ENCODE measurements at regions of chr20 and their contacts with region 1.

Region 1: DNA sequence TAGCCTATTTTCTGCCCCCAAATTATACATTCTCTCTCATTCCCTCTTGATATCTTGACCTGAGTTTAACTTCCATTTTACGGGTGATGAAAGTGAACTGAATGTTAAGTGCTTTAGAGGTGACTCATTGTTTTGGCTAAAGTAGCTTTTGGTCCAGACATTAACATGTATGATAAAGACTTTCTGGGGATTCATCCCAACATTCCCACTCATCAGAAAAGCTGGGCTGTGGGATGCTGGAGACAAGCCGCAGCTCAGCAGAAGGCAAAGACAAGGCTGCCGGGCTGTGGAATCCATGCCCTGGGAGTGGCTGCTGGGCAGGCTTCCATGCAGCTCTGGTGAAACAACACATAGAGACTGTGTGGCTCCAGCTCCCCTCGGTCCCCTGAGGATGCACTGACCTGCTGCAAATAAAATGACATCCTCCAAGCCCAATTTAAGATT is 89.9 kb upstream of the SYNDIG1 start:
- DNase-seq: no peak
- H3K4me3 ChIP-seq: no peak overlapping the region
- H3K4me3 Mint-ChIP-seq: no peak overlapping the region
- H3K27ac Mint-ChIP-seq: no peak overlapping the region
- H3K4me1 ChIP-seq: no peaks in the 10 kb centered on the region
- H3K4me1 Mint-ChIP-seq: no peaks in the 10 kb centered on the region
- H3K27me3 ChIP-seq: no peaks in the 10 kb centered on the region; the same call in 1 of the 2 replicates
- H3K27me3 Mint-ChIP-seq: peaks cover 26% of the 10 kb centered on the region
- CTCF ChIP-seq: no peak

Region 2: DNA sequence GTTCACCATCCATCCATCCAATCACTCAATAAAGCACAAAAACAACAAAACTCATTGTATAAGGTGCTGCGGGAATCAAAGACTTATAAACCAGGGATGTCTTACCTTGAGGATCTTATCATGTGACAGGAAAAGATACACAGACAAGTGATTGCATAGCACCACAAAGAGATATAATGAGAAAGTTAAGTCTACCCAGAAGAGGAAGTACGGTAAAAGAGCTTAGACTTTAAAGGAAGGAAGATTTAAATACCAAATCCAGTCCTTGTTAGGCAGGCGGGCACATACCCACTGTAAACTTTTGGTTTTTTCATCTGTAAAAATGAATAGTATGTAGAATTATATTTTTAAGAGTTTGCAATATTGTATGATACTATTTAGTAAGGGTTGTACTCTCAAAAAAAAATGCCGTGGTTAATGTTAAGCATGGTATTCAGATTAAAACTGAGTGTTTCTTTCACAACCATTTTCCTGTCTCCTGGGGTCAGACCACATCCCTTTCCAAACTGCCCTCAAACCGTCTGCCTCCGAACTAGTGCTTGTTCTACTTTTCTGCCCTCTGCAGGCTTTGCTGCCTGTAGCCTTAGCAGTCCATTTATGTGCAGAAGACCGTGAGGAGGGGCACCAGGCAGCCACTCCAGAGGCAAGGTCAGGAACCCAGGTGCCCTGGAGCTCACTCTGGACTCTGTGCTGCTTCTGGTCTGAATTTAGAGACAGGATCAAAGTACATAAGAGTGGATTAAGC is 89.6 kb before region 1 on chr20:
- CTCF ChIA-PET with region 1: no interaction called
- POLR2A ChIA-PET with region 1: no interaction called
- intact Hi-C with region 1: no loop called
- DNase-seq: peak in 1 of 2 experiments; percentile 4
- H3K4me3 ChIP-seq: no peak overlapping the region
- H3K4me3 Mint-ChIP-seq: no peak overlapping the region
- H3K27ac Mint-ChIP-seq: no peak overlapping the region
- H3K4me1 ChIP-seq: no peaks in the 10 kb centered on the region
- H3K4me1 Mint-ChIP-seq: no peaks in the 10 kb centered on the region
- H3K27me3 ChIP-seq: no peaks in the 10 kb centered on the region
- H3K27me3 Mint-ChIP-seq: peaks cover 10% of the 10 kb centered on the region
- CTCF ChIP-seq: no peak

Region 3: DNA sequence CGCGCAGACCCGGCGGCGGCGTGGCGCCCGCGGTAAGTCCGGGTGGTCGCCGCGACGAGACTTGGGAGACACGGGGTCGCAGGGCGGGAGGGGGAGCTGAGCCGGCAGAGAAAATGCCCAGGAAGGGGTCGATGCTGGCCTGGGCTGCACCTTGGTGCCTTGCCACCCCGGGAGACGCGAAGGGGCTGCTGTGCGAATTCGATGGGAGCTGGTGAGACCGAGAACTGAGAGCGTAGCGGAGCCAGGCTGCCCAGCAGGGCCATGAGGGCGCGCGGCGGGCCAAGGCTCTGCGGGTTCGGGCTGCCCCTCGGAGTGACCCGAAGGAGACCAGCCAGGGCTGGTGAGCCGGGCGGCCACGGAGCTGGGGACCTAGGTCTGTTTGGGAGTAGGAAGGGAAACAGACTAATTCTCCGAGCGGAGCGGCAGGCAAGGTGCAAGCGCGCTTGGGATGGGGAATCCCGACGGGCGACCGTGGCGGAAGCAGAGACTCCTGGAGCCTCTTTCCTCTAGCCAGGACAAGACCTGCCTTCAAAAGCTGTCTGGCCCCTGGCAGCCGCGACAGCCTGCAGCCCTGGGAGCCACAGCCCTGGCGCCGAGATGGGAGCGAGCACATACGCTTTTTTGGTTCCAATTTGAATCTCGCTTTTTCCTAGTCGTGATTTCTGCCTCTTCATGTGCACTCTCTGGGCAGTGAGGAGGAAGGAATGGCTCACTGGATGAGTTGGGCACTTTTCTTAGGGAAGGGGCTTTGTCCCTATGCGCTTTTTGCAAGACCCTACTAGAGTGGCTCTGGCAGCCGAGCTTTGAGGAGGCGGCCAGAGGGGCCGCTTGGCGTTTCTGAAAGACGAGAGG is 90.6 kb after region 1 on chr20:
- CTCF ChIA-PET with region 1: no interaction called
- POLR2A ChIA-PET with region 1: no interaction called
- intact Hi-C with region 1: loop called (anchors 10 kb)
- DNase-seq: no peak
- H3K4me3 ChIP-seq: no peak overlapping the region
- H3K4me3 Mint-ChIP-seq: no peak overlapping the region
- H3K27ac Mint-ChIP-seq: no peak overlapping the region
- H3K4me1 ChIP-seq: no peaks in the 10 kb centered on the region
- H3K4me1 Mint-ChIP-seq: no peaks in the 10 kb centered on the region
- H3K27me3 ChIP-seq: no peaks in the 10 kb centered on the region
- H3K27me3 Mint-ChIP-seq: peaks cover 13% of the 10 kb centered on the region
- CTCF ChIP-seq: no peak

Region 4: GRCh38 chr20:24657196-24657595 is 277.7 kb after region 1 on chr20:
- CTCF ChIA-PET with region 1: no interaction called
- POLR2A ChIA-PET with region 1: no interaction called
- intact Hi-C with region 1: no loop called
- DNase-seq: no peak
- H3K4me3 ChIP-seq: no peak overlapping the region
- H3K4me3 Mint-ChIP-seq: no peak overlapping the region
- H3K27ac Mint-ChIP-seq: no peak overlapping the region
- H3K4me1 ChIP-seq: no peaks in the 10 kb centered on the region
- H3K4me1 Mint-ChIP-seq: no peaks in the 10 kb centered on the region
- H3K27me3 ChIP-seq: no peaks in the 10 kb centered on the region; the same call in none of the 2 replicates
- H3K27me3 Mint-ChIP-seq: peaks cover 22% of the 10 kb centered on the region
- CTCF ChIP-seq: no peak

Measured in Caco-2 (cell line).